H1 (cell line): ENCODE measurements at regions of chr14 and their contacts with region 1.

Region 1: DNA sequence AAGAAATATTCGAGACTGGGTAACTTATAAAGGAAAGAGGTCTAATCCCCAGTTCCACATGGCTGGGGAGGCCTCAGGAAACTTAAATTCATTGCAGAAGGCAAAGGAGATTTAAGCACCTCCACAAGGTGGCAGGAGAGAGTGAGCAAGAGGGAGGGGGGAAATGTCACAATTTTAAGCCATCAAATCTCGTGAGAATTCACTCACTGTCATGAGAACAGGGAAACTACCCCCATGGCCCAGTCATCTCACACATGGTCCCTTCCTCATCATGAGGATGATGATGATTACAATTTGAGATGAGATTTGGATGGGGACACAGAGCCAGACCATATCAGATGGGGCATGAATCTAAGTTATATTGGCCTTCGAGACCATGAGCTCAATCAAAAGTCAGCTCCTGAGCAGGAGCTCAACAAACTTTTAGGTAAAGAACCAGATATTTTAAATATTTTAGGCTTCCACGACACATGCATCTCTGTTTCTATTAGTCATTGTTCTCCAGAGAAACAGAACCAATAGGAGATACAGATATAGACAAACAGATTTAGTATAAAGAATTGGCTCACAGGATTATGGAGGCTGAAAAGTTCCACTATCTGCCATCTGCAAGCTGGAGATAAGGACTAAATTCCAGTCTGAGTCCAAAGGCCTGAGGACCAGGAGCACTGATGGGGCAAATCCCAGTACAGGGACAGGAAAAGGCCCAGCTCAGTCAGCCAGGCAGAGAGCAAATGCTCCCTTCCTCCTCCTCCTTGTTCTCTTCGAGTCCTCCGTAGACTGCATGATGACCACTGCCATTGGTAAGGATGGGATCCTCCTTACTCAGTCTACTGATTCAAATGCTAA is 24.9 kb downstream of the DGLUCY start:
- DNase-seq: peak in 1 of 2 experiments; percentile 66
- H3K4me3 ChIP-seq: no peak overlapping the region
- H3K27ac ChIP-seq: no peak overlapping the region
- H3K4me1 ChIP-seq: peaks cover 0 to 5% (median 3%) of the 10 kb centered on the region in 4 experiments; a peak in 4 of 7 replicates
- H3K27me3 ChIP-seq: no peaks in the 10 kb centered on the region
- CTCF ChIP-seq: peak; percentile 3 to 76 (median 59)
- EP300 ChIP-seq: no peak
- POLR2A ChIP-seq: no peak
- RAD21 ChIP-seq: peak; percentile 35 to 53; a peak in 3 of 4 replicates

Region 2: GRCh38 chr14:90903101-90903500 is 235.6 kb before region 1 on chr14:
- CTCF ChIA-PET with region 1: interaction called, 42 read pairs
- POLR2A ChIA-PET with region 1: no interaction called
- DNase-seq: no peak
- H3K4me3 ChIP-seq: no peak overlapping the region
- H3K27ac ChIP-seq: no peak overlapping the region
- H3K4me1 ChIP-seq: no peaks in the 10 kb centered on the region
- H3K27me3 ChIP-seq: no peaks in the 10 kb centered on the region
- CTCF ChIP-seq: peak in 2 of 3 experiments; percentile 65 to 69; a peak in 3 of 4 replicates
- EP300 ChIP-seq: no peak
- POLR2A ChIP-seq: no peak
- RAD21 ChIP-seq: peak; percentile 85 to 89

Region 3: GRCh38 chr14:91098591-91098990 is 40.1 kb before region 1 on chr14:
- CTCF ChIA-PET with region 1: interaction called, 11 read pairs
- POLR2A ChIA-PET with region 1: no interaction called
- DNase-seq: no peak
- H3K4me3 ChIP-seq: no peak overlapping the region
- H3K27ac ChIP-seq: no peak overlapping the region
- H3K4me1 ChIP-seq: no peaks in the 10 kb centered on the region
- H3K27me3 ChIP-seq: no peaks in the 10 kb centered on the region
- CTCF ChIP-seq: no peak
- EP300 ChIP-seq: no peak
- POLR2A ChIP-seq: no peak
- RAD21 ChIP-seq: no peak

Region 4: GRCh38 chr14:91114079-91115065 is 24.4 kb before region 1 on chr14:
- CTCF ChIA-PET with region 1: interaction called, 34 read pairs
- POLR2A ChIA-PET with region 1: no interaction called
- DNase-seq: peak; percentile 81 to 88
- H3K4me3 ChIP-seq: peak overlapping the region; percentile 20 to 55 (median 32); a peak in 7 of 8 replicates
- H3K27ac ChIP-seq: peak overlapping the region; percentile 90
- H3K4me1 ChIP-seq: peaks cover 12 to 32% (median 19%) of the 10 kb centered on the region in 4 experiments
- H3K27me3 ChIP-seq: no peaks in the 10 kb centered on the region
- CTCF ChIP-seq: no peak
- EP300 ChIP-seq: peak in 1 of 2 experiments; percentile 7; a peak in 1 of 3 replicates
- POLR2A ChIP-seq: peak; percentile 66 to 75; a peak in 2 of 3 replicates
- RAD21 ChIP-seq: no peak; a peak in 1 of 4 replicates

Region 5: DNA sequence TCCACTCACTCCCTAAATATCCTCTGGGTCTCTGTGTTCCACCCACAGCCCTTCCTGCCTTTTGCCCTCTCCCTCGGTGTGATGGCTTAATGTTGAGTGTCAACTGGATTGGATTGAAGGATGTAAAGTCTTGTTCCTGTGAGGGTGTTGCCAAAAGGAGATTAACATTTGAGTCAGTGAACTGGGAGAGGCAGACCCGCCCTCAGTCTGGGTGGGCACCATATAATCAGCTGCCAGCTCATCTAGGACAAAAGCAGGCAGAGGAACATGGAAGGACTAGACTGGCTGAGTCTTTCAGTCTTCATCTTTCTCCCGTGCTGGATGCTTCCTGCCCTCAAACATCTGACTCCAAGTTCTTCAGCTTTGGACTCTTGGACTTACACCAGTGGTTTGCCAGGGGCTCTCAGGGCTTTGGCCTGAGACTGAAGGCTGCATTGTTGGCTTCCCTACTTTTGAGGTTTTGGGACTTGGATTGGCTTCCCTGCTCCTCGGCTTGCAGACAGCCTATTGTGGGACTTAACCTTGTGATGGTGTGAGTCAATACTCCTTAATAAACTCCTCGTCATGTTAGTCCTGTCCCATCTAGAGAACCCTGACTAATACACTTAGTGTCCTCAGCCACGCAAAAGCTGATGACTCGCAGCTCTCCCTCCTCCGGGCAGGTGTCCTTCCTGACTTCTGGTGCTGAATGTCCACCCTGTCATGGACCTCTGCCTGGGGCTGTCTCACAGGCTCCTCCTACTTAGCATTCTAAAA is 19.0 kb before region 1 on chr14:
- CTCF ChIA-PET with region 1: interaction called, 34 read pairs
- POLR2A ChIA-PET with region 1: no interaction called
- DNase-seq: no peak
- H3K4me3 ChIP-seq: no peak overlapping the region
- H3K27ac ChIP-seq: no peak overlapping the region
- H3K4me1 ChIP-seq: peaks cover 5 to 17% (median 10%) of the 10 kb centered on the region in 4 experiments
- H3K27me3 ChIP-seq: no peaks in the 10 kb centered on the region
- CTCF ChIP-seq: no peak
- EP300 ChIP-seq: no peak
- POLR2A ChIP-seq: no peak
- RAD21 ChIP-seq: no peak

Region 6: GRCh38 chr14:91127401-91127854 is 11.3 kb before region 1 on chr14:
- CTCF ChIA-PET with region 1: interaction called, 22 read pairs
- POLR2A ChIA-PET with region 1: interaction called, 3 read pairs
- DNase-seq: no peak
- H3K4me3 ChIP-seq: no peak overlapping the region
- H3K27ac ChIP-seq: no peak overlapping the region
- H3K4me1 ChIP-seq: no peaks in the 10 kb centered on the region; a peak in 1 of 7 replicates
- H3K27me3 ChIP-seq: no peaks in the 10 kb centered on the region
- CTCF ChIP-seq: no peak
- EP300 ChIP-seq: no peak
- POLR2A ChIP-seq: no peak
- RAD21 ChIP-seq: no peak

Region 7: GRCh38 chr14:91164685-91165084 is 25.9 kb after region 1 on chr14:
- CTCF ChIA-PET with region 1: interaction called, 18 read pairs
- POLR2A ChIA-PET with region 1: no interaction called
- DNase-seq: no peak
- H3K4me3 ChIP-seq: no peak overlapping the region
- H3K27ac ChIP-seq: no peak overlapping the region
- H3K4me1 ChIP-seq: no peaks in the 10 kb centered on the region
- H3K27me3 ChIP-seq: no peaks in the 10 kb centered on the region
- CTCF ChIP-seq: no peak
- EP300 ChIP-seq: no peak
- POLR2A ChIP-seq: no peak
- RAD21 ChIP-seq: no peak

Region 8: GRCh38 chr14:91292491-91292890 is 153.8 kb after region 1 on chr14:
- CTCF ChIA-PET with region 1: no interaction called
- POLR2A ChIA-PET with region 1: no interaction called
- DNase-seq: no peak
- H3K4me3 ChIP-seq: no peak overlapping the region
- H3K27ac ChIP-seq: no peak overlapping the region
- H3K4me1 ChIP-seq: no peaks in the 10 kb centered on the region
- H3K27me3 ChIP-seq: no peaks in the 10 kb centered on the region
- CTCF ChIP-seq: no peak
- EP300 ChIP-seq: no peak
- POLR2A ChIP-seq: no peak
- RAD21 ChIP-seq: no peak